MCF 10A (cell line): ENCODE measurements at regions of chr5 and their contacts with region 1.

Region 1: DNA sequence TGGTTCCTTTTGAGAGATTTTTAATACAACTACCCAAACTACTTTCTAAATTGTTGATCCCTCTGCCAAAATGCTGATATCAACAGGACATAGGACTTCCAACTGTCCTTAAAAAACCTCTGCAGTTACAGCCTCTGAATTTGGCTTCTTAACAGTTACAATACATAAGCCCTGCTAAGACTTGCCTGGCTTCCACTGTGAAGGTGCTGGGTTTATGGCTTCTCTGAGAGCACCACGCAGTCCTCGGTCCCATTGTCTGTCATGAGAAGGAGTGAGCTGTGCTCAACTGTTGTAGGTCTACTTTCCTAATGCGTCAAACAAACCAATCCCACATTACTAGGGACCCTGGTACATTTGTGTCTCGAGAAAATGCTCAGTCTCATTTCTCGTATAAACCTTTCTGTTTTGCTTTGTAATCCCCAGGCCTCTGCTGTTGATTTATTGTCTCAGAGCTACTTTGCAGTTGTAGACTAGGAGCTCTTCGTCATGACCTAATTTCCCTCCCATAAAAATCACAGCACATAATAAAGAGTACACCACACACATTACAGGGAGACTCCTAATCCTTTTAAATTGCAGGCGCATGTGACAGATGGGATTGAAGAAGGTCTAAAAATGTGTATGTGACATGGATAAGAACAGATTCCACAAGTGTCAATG is 274.9 kb downstream of the NR3C1 start:
- DNase-seq: no peak
- H3K4me3 Mint-ChIP-seq: no peak overlapping the region
- H3K27ac Mint-ChIP-seq: no peak overlapping the region
- H3K4me1 Mint-ChIP-seq: peaks cover 7% of the 10 kb centered on the region
- H3K27me3 Mint-ChIP-seq: no peaks in the 10 kb centered on the region
- CTCF ChIP-seq: no peak

Region 2: GRCh38 chr5:143118222-143118621 is 10.3 kb before region 1 on chr5:
- CTCF ChIA-PET with region 1: interaction called, 10 read pairs
- POLR2A ChIA-PET with region 1: interaction called, 9 read pairs
- intact Hi-C with region 1: no loop called
- DNase-seq: no peak
- H3K4me3 Mint-ChIP-seq: no peak overlapping the region
- H3K27ac Mint-ChIP-seq: no peak overlapping the region
- H3K4me1 Mint-ChIP-seq: no peaks in the 10 kb centered on the region
- H3K27me3 Mint-ChIP-seq: no peaks in the 10 kb centered on the region
- CTCF ChIP-seq: no peak